ENCODE measurements at regions of chr13 and their contacts with region 1.

Region 1: GRCh38 chr13:75482070-75482819 is at the start of gene TBC1D4:
- DNase-seq: peak; percentile 92
- H3K4me3 ChIP-seq: peak within 1 kb of the TSS; percentile 58 to 81 (median 73)
- H3K27ac ChIP-seq: peak within 1 kb of the TSS; percentile 69
- H3K4me1 ChIP-seq: peaks cover 31% of the 10 kb centered on the region
- H3K27me3 ChIP-seq: no peaks in the 10 kb centered on the region
- CTCF ChIP-seq: peak; percentile 76 to 84
- total RNA-seq, gene TBC1D4: 13.9 to 36.7 TPM

Region 2: GRCh38 chr13:75416327-75417005 is 65.8 kb before region 1 on chr13:
- CTCF ChIA-PET with region 1: no interaction called
- dilution Hi-C with region 1: no loop called
- in situ Hi-C with region 1: no loop called
- intact Hi-C with region 1: loop called (anchors 2 kb)
- DNase-seq: no peak
- H3K4me3 ChIP-seq: no peak overlapping the region
- H3K27ac ChIP-seq: no peak overlapping the region
- H3K4me1 ChIP-seq: peaks cover 30% of the 10 kb centered on the region
- H3K27me3 ChIP-seq: no peaks in the 10 kb centered on the region
- CTCF ChIP-seq: no peak

Region 3: DNA sequence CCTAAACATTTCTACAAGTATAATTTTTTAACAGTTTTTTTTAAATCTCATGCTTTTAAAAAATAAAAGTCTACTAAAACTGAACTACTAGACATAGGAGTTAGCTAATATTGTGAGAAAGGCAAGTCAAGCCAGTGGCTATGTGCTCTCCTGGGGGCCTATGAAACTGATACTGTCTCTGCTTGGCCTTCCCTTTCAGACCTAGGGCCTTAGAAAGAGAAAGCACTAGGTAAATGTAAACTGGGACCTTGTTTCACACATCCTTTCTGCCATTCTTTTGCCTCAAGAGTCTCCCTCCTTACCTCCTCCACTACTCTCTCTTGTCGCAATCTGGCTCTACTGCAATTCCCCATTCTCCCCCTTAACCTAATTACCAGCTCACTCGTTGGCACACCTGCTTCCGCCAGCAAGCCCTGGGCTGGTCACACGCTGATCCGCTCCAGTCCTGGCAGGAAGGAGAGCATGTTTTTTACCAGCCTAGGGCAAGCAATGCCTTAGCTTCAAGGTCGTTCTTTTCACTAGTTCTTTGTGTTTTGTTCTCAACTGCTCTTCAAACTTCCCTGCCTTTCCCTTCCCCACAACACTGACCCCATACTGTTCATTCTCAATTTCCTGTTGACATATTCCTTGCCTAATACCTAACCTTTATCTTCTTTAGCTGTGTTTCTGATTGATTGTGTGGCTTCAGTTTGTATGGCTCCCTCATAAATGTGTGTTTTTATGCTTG is 23.4 kb before region 1 on chr13:
- CTCF ChIA-PET with region 1: no interaction called
- dilution Hi-C with region 1: no loop called
- in situ Hi-C with region 1: no loop called
- intact Hi-C with region 1: loop called (anchors 2 kb)
- DNase-seq: peak; percentile 48
- H3K4me3 ChIP-seq: no peak overlapping the region
- H3K27ac ChIP-seq: peak overlapping the region; percentile 11
- H3K4me1 ChIP-seq: peaks cover 43% of the 10 kb centered on the region
- H3K27me3 ChIP-seq: no peaks in the 10 kb centered on the region
- CTCF ChIP-seq: no peak

Region 4: GRCh38 chr13:75549262-75550158 is 67.3 kb after region 1 on chr13 and contains the start of gene UCHL3:
- CTCF ChIA-PET with region 1: interaction called, 15 read pairs
- dilution Hi-C with region 1: no loop called
- in situ Hi-C with region 1: no loop called
- intact Hi-C with region 1: loop called (anchors 1 kb)
- DNase-seq: peak; percentile 91
- H3K4me3 ChIP-seq: peak within 1 kb of the TSS; percentile 78 to 98 (median 84)
- H3K27ac ChIP-seq: peak within 1 kb of the TSS; percentile 95
- H3K4me1 ChIP-seq: peaks cover 13% of the 10 kb centered on the region
- H3K27me3 ChIP-seq: no peaks in the 10 kb centered on the region
- CTCF ChIP-seq: peak; percentile 78 to 94
- total RNA-seq, gene UCHL3: 82.3 to 85.4 TPM

Measured in mammary epithelial cell (primary cell).